ENCODE measurements at regions of chr1 and their contacts with region 1.

Region 1: GRCh38 chr1:11037740-11038182 is 9.3 kb downstream of the MASP2 start:
- DNase-seq: peak; percentile 57 to 93
- H3K4me3 ChIP-seq: no peak overlapping the region
- H3K27ac ChIP-seq: no peak overlapping the region
- H3K4me1 ChIP-seq: no peaks in the 10 kb centered on the region
- H3K27me3 ChIP-seq: no peaks in the 10 kb centered on the region
- CTCF ChIP-seq: peak; percentile 92 to 98 (median 96)
- EP300 ChIP-seq: no peak
- POLR2A ChIP-seq: no peak
- RAD21 ChIP-seq: peak; percentile 100

Region 2: DNA sequence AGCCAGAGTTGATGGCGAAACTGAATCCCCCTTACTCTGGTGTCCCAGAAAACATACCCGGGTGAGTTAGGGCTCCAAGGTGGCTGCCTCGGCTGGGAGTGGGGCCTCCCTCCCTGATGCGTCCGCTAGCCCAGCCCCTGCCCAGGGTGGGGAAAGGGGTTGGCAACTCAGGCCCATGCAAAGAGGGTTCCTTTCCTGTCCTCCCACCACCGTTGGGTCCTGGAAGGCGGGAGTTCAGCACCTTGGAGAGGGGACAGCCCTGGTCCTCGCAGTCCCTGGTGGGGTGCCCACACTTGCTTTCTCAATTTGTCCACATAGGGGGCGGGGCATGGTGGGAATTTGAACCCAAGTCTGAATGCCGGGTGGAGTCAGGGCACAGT is 16.0 kb after region 1 on chr1:
- CTCF ChIA-PET with region 1: interaction called, 168 read pairs
- POLR2A ChIA-PET with region 1: interaction called, 31 read pairs
- DNase-seq: peak in 1 of 2 experiments; percentile 89
- H3K4me3 ChIP-seq: no peak overlapping the region
- H3K27ac ChIP-seq: 0 out of 2 replicates have a peak overlapping the region, but pooled peaks have one; percentile 6
- H3K4me1 ChIP-seq: peaks cover 0 to 15% (median 7%) of the 10 kb centered on the region in 4 experiments; a peak in 6 of 7 replicates
- H3K27me3 ChIP-seq: no peaks in the 10 kb centered on the region
- CTCF ChIP-seq: no peak
- EP300 ChIP-seq: no peak
- POLR2A ChIP-seq: no peak
- RAD21 ChIP-seq: no peak

Region 3: GRCh38 chr1:11059990-11060830 is 22.4 kb after region 1 on chr1 and contains the start of gene SRM:
- CTCF ChIA-PET with region 1: interaction called, 168 read pairs
- POLR2A ChIA-PET with region 1: interaction called, 31 read pairs
- DNase-seq: peak in 1 of 2 experiments; percentile 90
- H3K4me3 ChIP-seq: peak within 1 kb of the TSS; percentile 79 to 98 (median 86)
- H3K27ac ChIP-seq: peak within 1 kb of the TSS; percentile 83
- H3K4me1 ChIP-seq: peaks cover 0 to 12% (median 3%) of the 10 kb centered on the region in 4 experiments; a peak in 4 of 7 replicates
- H3K27me3 ChIP-seq: no peaks in the 10 kb centered on the region
- CTCF ChIP-seq: peak in 2 of 3 experiments; percentile 35 to 43; a peak in 3 of 4 replicates
- EP300 ChIP-seq: no peak
- POLR2A ChIP-seq: peak in 1 of 2 experiments; percentile 18; a peak in 1 of 3 replicates
- RAD21 ChIP-seq: peak in 1 of 2 experiments; percentile 25; a peak in 1 of 4 replicates
- total RNA-seq, gene SRM: 206 and 208 TPM in 2 replicates

Region 4: DNA sequence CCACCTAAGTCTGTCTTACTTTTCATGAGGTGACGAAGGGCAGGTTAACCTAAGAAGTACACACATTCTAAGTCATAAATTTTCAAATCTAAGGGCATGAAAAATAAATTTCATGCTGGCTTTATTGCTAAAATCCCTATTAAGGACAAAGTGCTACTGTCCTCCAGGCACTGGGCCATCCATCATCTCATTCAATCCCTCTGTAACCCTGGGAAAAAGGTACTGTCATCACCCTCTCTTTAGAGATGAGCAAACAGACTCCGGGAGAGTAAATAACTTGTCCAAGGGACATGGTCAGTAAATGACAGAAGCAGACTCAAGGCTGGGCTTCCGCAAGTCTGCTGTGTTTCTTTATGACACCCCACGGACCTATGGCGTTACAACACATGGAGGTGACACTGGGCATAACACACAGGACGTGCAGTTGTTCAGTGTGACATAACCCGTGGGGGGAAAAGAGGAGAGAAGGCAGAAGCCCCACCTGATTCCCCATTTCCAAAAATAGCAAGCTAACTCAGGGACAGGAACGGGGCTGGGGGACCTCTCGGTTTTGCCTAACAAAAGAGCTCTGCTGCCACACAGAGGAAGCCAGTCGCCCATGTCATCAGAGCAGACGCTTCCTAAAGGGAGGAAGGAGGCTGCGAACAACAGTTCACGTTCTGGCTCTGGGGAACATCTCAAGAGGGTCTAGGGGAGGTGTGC is 34.6 kb after region 1 on chr1:
- CTCF ChIA-PET with region 1: interaction called, 58 read pairs
- POLR2A ChIA-PET with region 1: no interaction called
- DNase-seq: no peak
- H3K4me3 ChIP-seq: no peak overlapping the region
- H3K27ac ChIP-seq: no peak overlapping the region
- H3K4me1 ChIP-seq: no peaks in the 10 kb centered on the region
- H3K27me3 ChIP-seq: no peaks in the 10 kb centered on the region
- CTCF ChIP-seq: no peak
- EP300 ChIP-seq: no peak
- POLR2A ChIP-seq: no peak
- RAD21 ChIP-seq: peak; percentile 9 to 27; a peak in 2 of 4 replicates

Region 5: DNA sequence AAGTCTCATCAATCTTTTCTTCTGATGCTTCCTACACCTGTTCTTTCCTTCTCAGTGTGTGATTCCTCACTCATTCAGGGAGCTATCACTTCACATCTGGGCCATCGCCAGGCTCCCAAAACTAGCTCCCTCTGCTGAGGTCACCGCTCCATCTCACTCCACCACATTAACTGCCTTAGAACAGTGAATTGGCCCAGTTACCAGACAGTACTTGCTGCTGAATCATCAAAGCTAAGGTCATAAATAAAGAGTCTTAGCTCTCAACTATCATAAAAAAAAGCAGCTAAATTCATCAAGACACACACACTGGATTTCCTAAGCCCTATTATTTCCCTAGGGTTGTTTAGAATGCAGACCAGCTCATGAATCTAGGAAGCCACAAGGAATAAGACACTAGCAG is 40.9 kb after region 1 on chr1:
- CTCF ChIA-PET with region 1: interaction called, 58 read pairs
- POLR2A ChIA-PET with region 1: no interaction called
- DNase-seq: no peak
- H3K4me3 ChIP-seq: no peak overlapping the region
- H3K27ac ChIP-seq: no peak overlapping the region
- H3K4me1 ChIP-seq: no peaks in the 10 kb centered on the region
- H3K27me3 ChIP-seq: no peaks in the 10 kb centered on the region
- CTCF ChIP-seq: no peak
- EP300 ChIP-seq: no peak
- POLR2A ChIP-seq: no peak
- RAD21 ChIP-seq: no peak

Region 6: DNA sequence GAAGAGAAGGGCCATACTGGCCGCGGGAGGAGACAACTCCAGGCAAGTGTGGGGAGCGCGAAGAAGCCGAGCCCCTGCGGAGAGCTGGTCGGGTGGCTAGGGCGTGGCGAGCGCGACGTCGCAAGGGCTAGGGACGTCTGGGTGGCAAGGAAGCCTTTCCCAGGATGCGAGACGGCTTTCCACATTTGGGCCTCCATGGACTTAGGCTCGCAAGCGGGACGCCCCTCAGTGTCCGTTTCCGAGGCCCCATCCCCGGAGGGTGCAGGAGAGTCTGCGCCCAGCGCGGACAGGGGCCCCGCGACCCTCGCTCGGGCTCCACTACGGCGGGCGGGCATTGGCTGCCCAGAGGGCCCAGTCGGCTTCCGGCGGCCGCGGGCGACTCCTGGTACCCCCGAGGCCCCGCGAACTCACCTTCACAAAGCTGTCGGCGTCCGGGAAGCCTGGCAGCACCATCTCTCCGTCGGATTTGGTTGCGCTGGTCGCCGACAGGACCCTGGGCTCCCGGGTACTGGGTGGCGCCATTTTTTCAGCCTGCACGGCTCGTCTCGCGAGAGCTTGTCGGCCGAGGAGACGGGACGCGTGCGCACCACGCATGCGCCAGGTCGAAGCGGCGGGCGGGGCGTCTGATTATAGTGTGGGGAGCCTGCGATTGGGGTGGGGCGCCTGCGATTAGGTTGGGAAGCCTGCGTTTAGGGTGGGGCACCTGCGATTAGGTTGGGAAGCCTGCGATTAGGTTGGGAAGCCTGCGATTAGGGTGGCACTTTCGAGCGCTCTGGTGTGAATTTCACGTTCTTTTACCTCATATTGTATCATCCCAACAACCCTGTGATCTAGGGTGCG is 61.8 kb after region 1 on chr1 and contains the start of gene EXOSC10:
- CTCF ChIA-PET with region 1: interaction called, 11 read pairs
- POLR2A ChIA-PET with region 1: no interaction called
- DNase-seq: peak; percentile 73 to 98
- H3K4me3 ChIP-seq: peak within 1 kb of the TSS; percentile 85 to 99 (median 97)
- H3K27ac ChIP-seq: peak within 1 kb of the TSS; percentile 93
- H3K4me1 ChIP-seq: peaks cover 0 to 6% (median 1%) of the 10 kb centered on the region in 4 experiments; a peak in 3 of 7 replicates
- H3K27me3 ChIP-seq: no peaks in the 10 kb centered on the region
- CTCF ChIP-seq: no peak; a peak in 1 of 4 replicates
- EP300 ChIP-seq: no peak
- POLR2A ChIP-seq: peak; percentile 58 to 95
- RAD21 ChIP-seq: no peak
- total RNA-seq, gene EXOSC10: 77.3 and 86.1 TPM in 2 replicates

Region 7: GRCh38 chr1:11158720-11159321 is 121.1 kb after region 1 on chr1:
- CTCF ChIA-PET with region 1: no interaction called
- POLR2A ChIA-PET with region 1: no interaction called
- DNase-seq: no peak
- H3K4me3 ChIP-seq: no peak overlapping the region
- H3K27ac ChIP-seq: no peak overlapping the region
- H3K4me1 ChIP-seq: no peaks in the 10 kb centered on the region
- H3K27me3 ChIP-seq: no peaks in the 10 kb centered on the region
- CTCF ChIP-seq: no peak
- EP300 ChIP-seq: no peak
- POLR2A ChIP-seq: no peak
- RAD21 ChIP-seq: no peak

Region 8: DNA sequence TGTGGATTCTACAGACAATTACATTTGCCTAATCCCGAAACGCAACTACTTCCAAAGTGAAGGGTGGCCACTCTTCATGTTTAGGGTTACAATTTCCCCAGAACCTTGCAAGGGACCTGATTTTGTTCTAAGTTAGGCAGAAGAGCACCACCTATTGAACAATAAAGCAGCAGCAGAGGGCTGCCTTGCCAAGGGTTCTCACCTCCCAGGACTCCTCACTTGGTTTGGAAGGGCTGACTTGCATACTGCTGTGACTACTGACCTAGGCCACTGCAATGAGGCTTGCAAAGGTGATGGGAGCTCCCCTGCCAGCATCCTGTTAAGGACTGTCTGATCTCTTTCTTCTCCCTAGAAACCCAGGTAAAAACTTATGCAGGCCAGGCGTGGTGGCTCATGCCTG is 210.4 kb after region 1 on chr1:
- CTCF ChIA-PET with region 1: interaction called, 12 read pairs
- POLR2A ChIA-PET with region 1: no interaction called
- DNase-seq: no peak
- H3K4me3 ChIP-seq: no peak overlapping the region
- H3K27ac ChIP-seq: no peak overlapping the region
- H3K4me1 ChIP-seq: no peaks in the 10 kb centered on the region
- H3K27me3 ChIP-seq: no peaks in the 10 kb centered on the region
- CTCF ChIP-seq: no peak
- EP300 ChIP-seq: no peak
- POLR2A ChIP-seq: no peak
- RAD21 ChIP-seq: no peak; a peak in 1 of 4 replicates

Measured in H1 (cell line).